ENCODE measurements at regions of chr1 and their contacts with region 1.

Region 1: GRCh38 chr1:28494737-28495136 is 11.1 kb upstream of the RCC1 start:
- DNase-seq: no peak
- H3K4me3 ChIP-seq: no peak overlapping the region
- H3K27ac ChIP-seq: no peak overlapping the region
- H3K4me1 ChIP-seq: no peaks in the 10 kb centered on the region
- H3K27me3 ChIP-seq: no peaks in the 10 kb centered on the region
- CTCF ChIP-seq: no peak
- POLR2A ChIP-seq: no peak

Region 2: DNA sequence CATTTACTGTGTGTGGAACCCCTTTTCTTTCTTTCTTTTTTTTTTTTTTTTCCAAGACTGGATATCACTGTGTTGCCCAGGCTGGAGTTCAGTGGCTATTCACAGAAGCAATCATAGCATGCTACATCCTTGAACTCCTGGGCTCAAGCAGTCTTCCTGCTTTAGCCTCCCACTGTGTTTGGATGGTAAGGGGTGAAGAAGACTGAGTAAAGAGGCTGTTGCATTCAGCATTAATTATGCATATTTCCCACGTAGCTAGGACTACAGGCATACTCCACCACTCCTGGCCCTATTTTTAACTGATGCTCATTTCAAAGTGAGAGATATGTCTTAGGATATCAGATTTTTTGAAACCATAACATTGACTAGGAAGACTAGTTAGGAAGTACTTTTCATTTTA is 85.6 kb before region 1 on chr1:
- intact Hi-C with region 1: loop called (anchors 5 kb)
- DNase-seq: no peak
- H3K4me3 ChIP-seq: no peak overlapping the region
- H3K27ac ChIP-seq: no peak overlapping the region
- H3K4me1 ChIP-seq: no peaks in the 10 kb centered on the region
- H3K27me3 ChIP-seq: no peaks in the 10 kb centered on the region
- CTCF ChIP-seq: no peak
- POLR2A ChIP-seq: no peak

Measured in prostate gland (tissue), 2 donors.